ENCODE measurements at regions of chr9 and their contacts with region 1.

Region 1: GRCh38 chr9:69759421-69760277 is at the start of gene PTAR1:
- DNase-seq: peak; percentile 89 to 98
- H3K4me3 ChIP-seq: peak within 1 kb of the TSS; percentile 79
- CTCF ChIP-seq: no peak
- POLR2A ChIP-seq: no peak
- total RNA-seq, gene PTAR1: 27.8 to 52.3 (median 47.8) TPM

Region 2: GRCh38 chr9:69611221-69611620 is 148.4 kb before region 1 on chr9:
- intact Hi-C with region 1: no loop called
- DNase-seq: no peak
- H3K4me3 ChIP-seq: no peak overlapping the region
- CTCF ChIP-seq: no peak
- POLR2A ChIP-seq: no peak

Region 3: GRCh38 chr9:69672596-69673310 is 86.9 kb before region 1 on chr9:
- intact Hi-C with region 1: loop called (anchors 10 kb)
- DNase-seq: peak; percentile 71 to 96
- H3K4me3 ChIP-seq: peak overlapping the region; percentile 63
- CTCF ChIP-seq: peak in 1 of 3 donors; percentile 83
- POLR2A ChIP-seq: no peak